Left ventricle myocardium inferior (tissue), 1 donor: ENCODE measurements at regions of chr20 and their contacts with region 1.

Region 1: DNA sequence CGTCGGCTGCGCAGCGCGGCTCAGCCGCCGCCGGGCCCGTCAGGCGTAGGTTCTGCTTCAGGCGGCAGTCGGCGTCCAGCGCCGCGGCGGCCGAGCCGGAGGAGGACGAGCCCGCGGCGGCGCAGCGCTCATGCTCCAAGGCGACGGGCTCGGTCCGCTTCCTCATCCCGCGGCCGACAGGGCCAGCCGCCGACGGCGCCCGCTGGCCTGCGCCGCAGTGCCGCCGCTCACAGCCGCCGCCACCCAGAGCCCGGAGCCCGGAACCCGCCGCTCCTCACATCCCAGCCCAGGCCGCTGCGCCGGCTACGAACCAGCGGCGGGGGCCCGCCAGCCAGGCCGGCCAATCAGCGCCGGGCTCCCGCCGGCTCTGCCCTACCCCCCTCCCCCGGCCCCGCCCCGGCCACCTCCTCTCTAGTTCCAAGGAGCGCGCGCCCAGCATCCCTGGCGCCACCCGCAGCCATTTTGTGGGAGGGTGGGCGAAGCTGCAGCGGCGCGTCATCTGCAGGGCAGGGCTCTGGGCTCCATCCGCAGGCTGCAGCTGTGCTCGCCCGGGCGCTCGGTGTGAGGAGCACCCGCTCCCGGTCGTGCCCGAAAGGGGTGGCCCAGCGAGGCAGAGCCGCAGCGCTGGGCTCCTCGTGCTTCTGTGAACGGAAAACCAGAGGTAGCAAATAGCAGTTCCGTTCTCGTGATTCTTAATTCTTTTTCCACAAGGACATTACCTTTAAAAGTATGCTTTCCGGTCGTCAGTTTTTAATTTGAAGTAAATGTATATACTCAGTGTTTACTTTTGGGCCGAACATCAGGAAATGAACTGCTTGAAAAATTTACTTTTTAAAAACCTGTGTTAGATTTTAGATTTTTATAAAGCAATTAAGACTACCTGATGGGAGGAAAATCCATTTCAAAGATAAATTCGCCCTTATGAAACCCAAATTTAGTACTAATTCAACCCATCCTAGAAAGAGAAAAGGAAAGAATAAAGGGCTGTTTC is at the start of gene ABHD12:
- DNase-seq: peak; percentile 97
- H3K4me3 ChIP-seq: peak within 1 kb of the TSS; percentile 87
- H3K27ac ChIP-seq: peak within 1 kb of the TSS; percentile 93
- H3K4me1 ChIP-seq: peaks cover 25% of the 10 kb centered on the region
- H3K27me3 ChIP-seq: no peaks in the 10 kb centered on the region
- CTCF ChIP-seq: no peak
- total RNA-seq, gene ABHD12: 23.2 TPM

Region 2: GRCh38 chr20:24992487-24993205 is 398.2 kb before region 1 on chr20 and contains the start of gene APMAP:
- intact Hi-C with region 1: loop called (anchors 10 kb)
- DNase-seq: peak; percentile 97
- H3K4me3 ChIP-seq: peak within 1 kb of the TSS; percentile 93
- H3K27ac ChIP-seq: peak within 1 kb of the TSS; percentile 96
- H3K4me1 ChIP-seq: peaks cover 68% of the 10 kb centered on the region
- H3K27me3 ChIP-seq: no peaks in the 10 kb centered on the region
- CTCF ChIP-seq: no peak
- total RNA-seq, gene APMAP: 23.8 TPM

Region 3: GRCh38 chr20:25076731-25077609 is 313.9 kb before region 1 on chr20:
- intact Hi-C with region 1: loop called (anchors 10 kb)
- DNase-seq: no peak
- H3K4me3 ChIP-seq: peak overlapping the region; percentile 56
- H3K27ac ChIP-seq: no peak overlapping the region
- H3K4me1 ChIP-seq: peaks cover 28% of the 10 kb centered on the region
- H3K27me3 ChIP-seq: peaks cover 89% of the 10 kb centered on the region
- CTCF ChIP-seq: peak; percentile 38

Region 4: DNA sequence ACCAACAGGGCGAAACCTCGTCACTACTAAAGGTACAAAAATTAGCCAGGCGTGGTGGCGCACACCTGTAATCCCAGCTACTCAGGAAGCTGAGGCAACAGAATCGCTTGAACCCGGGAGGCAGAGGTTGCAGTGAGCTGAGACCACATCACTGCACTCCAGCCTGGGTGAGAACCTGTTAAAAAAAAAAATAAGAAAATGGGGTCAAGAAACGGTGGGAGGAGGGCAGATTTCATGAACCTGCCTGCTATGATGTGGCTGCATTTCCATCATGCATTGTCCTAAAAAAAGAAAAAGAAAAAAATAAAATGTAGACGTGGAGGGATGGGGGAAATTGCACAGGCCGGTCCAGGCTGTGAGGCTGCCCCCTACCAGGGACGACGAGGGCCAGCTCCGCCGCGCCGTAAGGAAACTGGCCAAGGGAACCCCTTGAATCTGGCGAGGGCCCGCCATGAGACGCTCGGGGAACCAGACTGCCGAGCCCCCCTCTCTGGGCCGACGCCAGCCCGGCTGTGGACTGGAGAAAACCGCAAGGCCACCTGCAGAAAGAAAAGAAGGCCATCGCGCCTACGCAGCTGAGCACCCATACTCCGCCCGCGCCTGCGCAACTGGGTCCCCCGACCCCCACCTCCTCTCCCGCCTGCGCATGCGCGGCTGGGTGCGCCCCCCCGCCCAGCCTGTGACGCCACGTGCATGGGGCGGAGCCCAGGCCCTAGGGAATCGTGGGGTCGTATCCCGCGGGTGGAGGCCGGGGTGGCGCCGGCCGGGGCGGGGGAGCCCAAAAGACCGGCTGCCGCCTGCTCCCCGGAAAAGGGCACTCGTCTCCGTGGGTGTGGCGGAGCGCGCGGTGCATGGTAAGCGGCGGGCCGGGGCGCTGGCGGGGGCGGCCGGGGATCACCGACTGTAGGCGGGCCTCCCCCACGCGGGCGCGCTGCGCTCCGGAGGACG is 195.5 kb before region 1 on chr20 and contains the start of gene ENTPD6:
- intact Hi-C with region 1: loop called (anchors 10 kb)
- DNase-seq: peak; percentile 93
- H3K4me3 ChIP-seq: peak within 1 kb of the TSS; percentile 98
- H3K27ac ChIP-seq: peak within 1 kb of the TSS; percentile 96
- H3K4me1 ChIP-seq: peaks cover 78% of the 10 kb centered on the region
- H3K27me3 ChIP-seq: no peaks in the 10 kb centered on the region
- CTCF ChIP-seq: peak; percentile 1
- total RNA-seq, gene ENTPD6: 106 TPM

Region 5: DNA sequence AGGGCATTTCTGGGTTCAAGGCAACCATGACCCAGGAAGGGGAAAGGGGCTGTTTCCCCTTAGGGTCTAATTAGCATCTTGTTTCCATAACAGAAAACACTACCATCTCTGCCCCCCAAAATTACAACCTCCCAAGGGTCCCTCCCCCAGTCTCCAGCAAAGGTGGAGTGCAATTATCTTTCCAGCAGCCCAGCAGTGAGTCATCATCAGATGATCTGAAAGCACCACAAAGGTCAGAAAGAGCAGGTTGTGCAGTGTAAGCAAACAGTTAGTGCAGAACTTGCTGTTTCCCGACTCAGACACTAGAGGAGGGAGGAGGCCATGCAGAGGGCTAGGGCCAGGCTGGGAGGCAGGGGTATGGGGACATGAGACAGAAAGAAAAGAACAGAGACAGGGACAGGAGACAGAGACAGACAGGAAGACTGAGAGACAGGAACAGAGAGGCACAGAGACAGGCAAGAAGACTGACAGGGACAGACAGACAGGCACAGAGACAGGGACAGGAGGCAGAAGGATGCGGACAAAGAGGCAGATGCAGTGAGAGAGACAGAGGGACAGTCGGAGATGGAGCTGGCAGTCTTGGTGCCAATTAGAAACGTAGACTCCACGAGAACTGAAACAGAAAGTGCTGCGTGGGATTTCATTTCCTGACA is 80.4 kb before region 1 on chr20:
- intact Hi-C with region 1: loop called (anchors 10 kb)
- DNase-seq: no peak
- H3K4me3 ChIP-seq: peak overlapping the region; percentile 24
- H3K27ac ChIP-seq: peak overlapping the region; percentile 52
- H3K4me1 ChIP-seq: peaks cover 29% of the 10 kb centered on the region
- H3K27me3 ChIP-seq: no peaks in the 10 kb centered on the region
- CTCF ChIP-seq: peak; percentile 45

Region 6: GRCh38 chr20:25508078-25508770 is 117.4 kb after region 1 on chr20:
- intact Hi-C with region 1: no loop called
- DNase-seq: no peak
- H3K4me3 ChIP-seq: no peak overlapping the region
- H3K27ac ChIP-seq: no peak overlapping the region
- H3K4me1 ChIP-seq: no peaks in the 10 kb centered on the region
- H3K27me3 ChIP-seq: no peaks in the 10 kb centered on the region
- CTCF ChIP-seq: no peak

Region 7: DNA sequence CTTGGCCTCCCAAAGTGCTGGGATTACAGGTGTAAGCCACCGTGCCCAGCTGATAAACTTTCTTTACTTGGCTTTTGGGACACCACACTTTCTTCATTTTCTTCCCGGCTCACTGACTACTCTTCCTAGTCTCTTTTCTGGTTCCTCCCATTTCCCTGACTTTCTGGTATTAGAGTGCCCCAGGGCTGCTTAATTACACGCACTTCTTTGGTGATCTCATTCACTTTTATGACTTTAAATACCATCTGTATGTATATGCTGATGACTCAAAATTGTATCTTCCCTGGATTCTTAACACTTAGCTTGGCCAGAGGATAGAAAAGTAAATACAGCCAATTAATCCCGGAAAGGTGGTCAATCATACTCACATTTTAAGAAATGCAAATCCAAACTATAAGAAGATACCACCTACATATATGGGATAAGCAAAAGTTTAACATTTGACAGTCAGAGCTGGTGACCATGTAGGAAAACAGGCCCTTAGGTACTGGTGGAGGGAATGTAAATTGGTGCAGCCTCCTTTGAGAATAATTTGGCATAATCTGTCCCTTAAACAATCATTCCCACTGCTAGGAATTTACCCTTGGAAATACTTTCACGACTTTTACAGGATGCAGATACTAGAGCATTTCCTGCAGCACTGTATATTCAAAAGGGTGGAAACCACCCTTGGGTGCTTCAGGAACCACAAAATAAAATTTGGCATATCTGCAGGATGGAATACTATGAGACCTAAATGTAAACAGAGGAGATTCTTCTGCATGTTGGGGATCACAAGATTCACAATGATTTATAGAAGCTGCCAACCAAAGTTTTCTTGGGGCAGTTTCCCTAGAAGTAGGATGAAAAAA is 242.3 kb after region 1 on chr20:
- intact Hi-C with region 1: no loop called
- DNase-seq: no peak
- H3K4me3 ChIP-seq: no peak overlapping the region
- H3K27ac ChIP-seq: no peak overlapping the region
- H3K4me1 ChIP-seq: no peaks in the 10 kb centered on the region
- H3K27me3 ChIP-seq: no peaks in the 10 kb centered on the region
- CTCF ChIP-seq: no peak